ENCODE measurements at regions of chr16 and their contacts with region 1.

Region 1: GRCh38 chr16:70454222-70455034 is at the start of gene FCSK:
- DNase-seq: peak in 8 of 10 donors; percentile 53 to 81 (median 70)
- H3K4me3 ChIP-seq: peak within 1 kb of the TSS; percentile 75 to 100 (median 98)
- H3K27ac ChIP-seq: peak within 1 kb of the TSS; percentile 77 to 100 (median 97)
- H3K27me3 ChIP-seq: peaks cover 0 to 7% (median 0%) of the 10 kb centered on the region in 45 donors
- CTCF ChIP-seq: peak in 22 of 56 donors; percentile 1 to 47 (median 22)
- total RNA-seq, gene FCSK: 15.7 to 38.7 (median 23.8) TPM

Region 2: GRCh38 chr16:70438969-70439862 is 15.2 kb before region 1 on chr16 and contains the start of gene ST3GAL2:
- intact Hi-C with region 1: loop called in 1 of 2 experiments (anchors 1 kb)
- DNase-seq: peak; percentile 90 to 96 (median 94)
- H3K4me3 ChIP-seq: peak within 1 kb of the TSS; percentile 48 to 99 (median 81)
- H3K27ac ChIP-seq: peak within 1 kb of the TSS in 58 of 59 donors; percentile 31 to 96 (median 86)
- H3K27me3 ChIP-seq: no peaks in the 10 kb centered on the region
- CTCF ChIP-seq: peak in 29 of 56 donors; percentile 4 to 55 (median 30)
- total RNA-seq, gene ST3GAL2: 15.9 to 62.9 (median 30.9) TPM

Region 3: GRCh38 chr16:70589998-70590471 is 135.6 kb after region 1 on chr16:
- intact Hi-C with region 1: no loop called
- DNase-seq: no peak
- H3K4me3 ChIP-seq: no peak overlapping the region
- H3K27ac ChIP-seq: peak overlapping the region in 5 of 59 donors; percentile 6 to 68 (median 13)
- H3K27me3 ChIP-seq: no peaks in the 10 kb centered on the region
- CTCF ChIP-seq: no peak

Measured in dorsolateral prefrontal cortex (tissue), 120 donors.